ENCODE measurements at regions of chr2 and their contacts with region 1.

Region 1: GRCh38 chr2:151379169-151379568 is 21.8 kb downstream of the TNFAIP6 start:
- DNase-seq: peak in 3 of 14 experiments; percentile 4 to 20 (median 17)
- ATAC-seq: no peak
- H3K4me3 ChIP-seq: no peak overlapping the region
- H3K4me3 Mint-ChIP-seq: no peak overlapping the region
- H3K27ac ChIP-seq: no peak overlapping the region
- H3K27ac Mint-ChIP-seq: no peak overlapping the region
- H3K4me1 ChIP-seq: peaks cover 2% of the 10 kb centered on the region
- H3K4me1 Mint-ChIP-seq: no peaks in the 10 kb centered on the region
- H3K27me3 ChIP-seq: no peaks in the 10 kb centered on the region
- H3K27me3 Mint-ChIP-seq: no peaks in the 10 kb centered on the region
- CTCF ChIP-seq: no peak

Region 2: GRCh38 chr2:151306621-151307020 is 72.5 kb before region 1 on chr2:
- CTCF ChIA-PET with region 1: no interaction called
- POLR2A ChIA-PET with region 1: no interaction called
- intact Hi-C with region 1: loop called in 1 of 2 experiments (anchors 5 kb)
- DNase-seq: no peak
- ATAC-seq: no peak
- H3K4me3 ChIP-seq: no peak overlapping the region
- H3K4me3 Mint-ChIP-seq: no peak overlapping the region
- H3K27ac ChIP-seq: no peak overlapping the region
- H3K27ac Mint-ChIP-seq: no peak overlapping the region
- H3K4me1 ChIP-seq: no peaks in the 10 kb centered on the region
- H3K4me1 Mint-ChIP-seq: no peaks in the 10 kb centered on the region
- H3K27me3 ChIP-seq: peaks cover 2 to 4% of the 10 kb centered on the region in 2 experiments
- H3K27me3 Mint-ChIP-seq: peaks cover 3% of the 10 kb centered on the region
- CTCF ChIP-seq: no peak

Measured in CD4-positive, alpha-beta T cell (primary cell).